OCI-LY7 (cell line): ENCODE measurements at regions of chr7 and their contacts with region 1.

Region 1: DNA sequence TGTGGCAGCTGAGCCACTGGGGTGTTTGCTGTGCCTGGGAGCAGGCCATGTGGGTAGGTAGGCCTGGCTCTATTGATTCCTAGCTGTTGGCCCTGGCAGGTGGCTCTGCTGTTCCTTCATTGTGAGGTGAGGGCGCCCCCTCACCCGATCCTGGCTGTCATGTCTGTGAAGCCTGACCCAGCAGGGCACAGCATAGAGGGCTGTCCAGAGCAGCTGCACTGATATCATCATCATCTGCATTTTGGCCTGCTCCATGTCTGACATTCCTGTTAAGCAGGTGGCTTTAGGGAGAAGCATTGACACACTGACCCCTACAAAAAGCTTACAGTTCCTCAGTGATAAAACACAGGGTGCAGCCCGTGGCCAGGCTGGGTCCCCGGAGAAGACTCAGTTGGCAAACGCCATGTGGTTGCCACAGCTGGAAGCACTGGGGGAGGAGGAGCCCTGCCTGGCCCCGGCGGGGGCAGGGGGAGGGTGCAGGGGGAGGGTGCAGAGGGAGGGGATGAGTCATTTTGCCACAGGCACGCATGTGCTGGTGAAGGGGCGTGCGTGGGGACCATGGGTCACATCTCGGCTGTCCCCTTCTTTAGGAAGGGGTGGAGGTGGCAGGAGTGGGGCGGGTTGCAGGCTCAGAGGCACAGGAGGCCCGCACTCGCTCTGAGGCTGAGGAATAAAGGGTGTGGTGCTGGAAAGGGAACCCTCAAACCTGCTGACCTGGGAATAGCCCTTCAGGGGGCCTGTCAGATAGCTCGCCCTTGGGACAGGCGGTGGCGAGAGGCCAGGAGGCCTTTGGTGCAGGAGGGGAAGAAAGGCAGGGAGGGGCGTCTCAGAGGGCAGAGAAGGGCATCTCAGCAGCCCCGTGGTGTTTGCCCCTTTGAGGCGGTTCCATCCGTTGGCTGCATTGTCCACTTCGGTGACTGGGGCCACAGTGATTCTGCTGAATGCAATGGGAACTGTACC is 31.6 kb downstream of the IKZF1 start:
- DNase-seq: peak; percentile 71
- H3K4me3 ChIP-seq: peak overlapping the region; percentile 6
- H3K27ac ChIP-seq: peak overlapping the region; percentile 97
- H3K4me1 ChIP-seq: peaks cover 100% of the 10 kb centered on the region
- CTCF ChIP-seq: peak; percentile 75

Region 2: GRCh38 chr7:50142425-50143017 is 193.6 kb before region 1 on chr7:
- CTCF ChIA-PET with region 1: interaction called, 3 read pairs
- POLR2A ChIA-PET with region 1: interaction called, 39 read pairs
- intact Hi-C with region 1: loop called (anchors 1 kb)
- DNase-seq: peak; percentile 80
- H3K4me3 ChIP-seq: no peak overlapping the region
- H3K27ac ChIP-seq: peak overlapping the region; percentile 99
- H3K4me1 ChIP-seq: peaks cover 70% of the 10 kb centered on the region
- CTCF ChIP-seq: peak; percentile 96

Region 3: GRCh38 chr7:50266635-50267386 is 69.3 kb before region 1 on chr7:
- CTCF ChIA-PET with region 1: no interaction called
- POLR2A ChIA-PET with region 1: interaction called, 5 read pairs
- intact Hi-C with region 1: loop called (anchors 2 kb)
- DNase-seq: peak; percentile 76
- H3K4me3 ChIP-seq: peak overlapping the region; percentile 29
- H3K27ac ChIP-seq: peak overlapping the region; percentile 85
- H3K4me1 ChIP-seq: peaks cover 100% of the 10 kb centered on the region
- CTCF ChIP-seq: no peak

Region 4: GRCh38 chr7:50349963-50350944 is 14.2 kb after region 1 on chr7:
- CTCF ChIA-PET with region 1: no interaction called
- POLR2A ChIA-PET with region 1: interaction called, 94 read pairs
- intact Hi-C with region 1: no loop called
- DNase-seq: no peak
- H3K4me3 ChIP-seq: peak overlapping the region; percentile 12
- H3K27ac ChIP-seq: peak overlapping the region; percentile 42
- H3K4me1 ChIP-seq: peaks cover 57% of the 10 kb centered on the region
- CTCF ChIP-seq: no peak

Region 5: GRCh38 chr7:50418086-50418515 is 82.0 kb after region 1 on chr7:
- CTCF ChIA-PET with region 1: no interaction called
- POLR2A ChIA-PET with region 1: interaction called, 3 read pairs
- intact Hi-C with region 1: loop called (anchors 5 kb)
- DNase-seq: peak; percentile 88
- H3K4me3 ChIP-seq: no peak overlapping the region
- H3K27ac ChIP-seq: no peak overlapping the region
- H3K4me1 ChIP-seq: peaks cover 29% of the 10 kb centered on the region
- CTCF ChIP-seq: peak; percentile 98

Region 6: DNA sequence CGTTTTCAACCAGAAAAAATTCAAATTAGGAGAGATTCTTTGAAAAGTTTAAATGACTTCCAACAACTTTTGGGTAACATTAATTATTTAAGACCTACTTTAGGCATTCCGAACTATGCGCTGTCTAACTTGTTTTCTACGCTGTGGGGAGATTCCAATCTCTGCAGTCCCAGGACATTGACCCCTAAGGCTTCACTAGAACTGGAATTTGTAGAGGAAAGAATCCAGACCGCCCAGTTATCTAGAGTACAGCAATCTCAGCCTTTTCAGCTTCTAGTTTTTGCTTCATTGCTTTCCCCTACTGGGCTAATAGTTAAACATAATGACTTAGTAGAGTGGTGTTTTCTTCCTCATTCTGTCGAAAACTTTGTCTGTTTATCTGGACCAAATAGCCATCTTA is 244.0 kb after region 1 on chr7:
- CTCF ChIA-PET with region 1: no interaction called
- POLR2A ChIA-PET with region 1: no interaction called
- intact Hi-C with region 1: no loop called
- DNase-seq: no peak
- H3K4me3 ChIP-seq: no peak overlapping the region
- H3K27ac ChIP-seq: no peak overlapping the region
- H3K4me1 ChIP-seq: no peaks in the 10 kb centered on the region
- CTCF ChIP-seq: no peak